CD8-positive, alpha-beta memory T cell (primary cell): ENCODE measurements at regions of chr22 and their contacts with region 1.

Region 1: GRCh38 chr22:30356449-30357235 is at the starts of genes CCDC157 and SF3A1:
- DNase-seq: peak; percentile 81 to 89 (median 88)
- H3K4me3 ChIP-seq: peak within 1 kb of the TSS; percentile 96
- H3K4me3 Mint-ChIP-seq: peak within 1 kb of the TSS; percentile 94 to 99 (median 98)
- H3K27ac ChIP-seq: peak within 1 kb of the TSS; percentile 98
- H3K27ac Mint-ChIP-seq: peak within 1 kb of the TSS; percentile 91 to 99 (median 96)
- H3K4me1 ChIP-seq: peaks cover 41% of the 10 kb centered on the region
- H3K4me1 Mint-ChIP-seq: peaks cover 46 to 57% (median 57%) of the 10 kb centered on the region in 3 donors
- H3K27me3 ChIP-seq: no peaks in the 10 kb centered on the region
- H3K27me3 Mint-ChIP-seq: peaks cover 0 to 3% of the 10 kb centered on the region in 2 donors
- total RNA-seq, gene CCDC157: 2.7 to 2.9 TPM
- total RNA-seq, gene SF3A1: 235 to 241 TPM

Region 2: GRCh38 chr22:30195245-30196140 is 161.1 kb before region 1 on chr22:
- CTCF ChIA-PET with region 1: no interaction called
- POLR2A ChIA-PET with region 1: no interaction called
- DNase-seq: no peak
- H3K4me3 ChIP-seq: no peak overlapping the region
- H3K4me3 Mint-ChIP-seq: no peak overlapping the region
- H3K27ac ChIP-seq: no peak overlapping the region
- H3K27ac Mint-ChIP-seq: peak overlapping the region in 6 of 8 donors; percentile 51 to 92 (median 74)
- H3K4me1 ChIP-seq: peaks cover 11% of the 10 kb centered on the region
- H3K4me1 Mint-ChIP-seq: peaks cover 21 to 27% (median 26%) of the 10 kb centered on the region in 3 donors
- H3K27me3 ChIP-seq: no peaks in the 10 kb centered on the region
- H3K27me3 Mint-ChIP-seq: peaks cover 0 to 7% of the 10 kb centered on the region in 2 donors

Region 3: GRCh38 chr22:30305519-30305905 is 51.1 kb before region 1 on chr22:
- CTCF ChIA-PET with region 1: no interaction called
- POLR2A ChIA-PET with region 1: interaction called, 15 read pairs
- DNase-seq: peak in 4 of 5 donors; percentile 35 to 68 (median 60)
- H3K4me3 ChIP-seq: peak overlapping the region; percentile 61
- H3K4me3 Mint-ChIP-seq: peak overlapping the region; percentile 64 to 77 (median 69)
- H3K27ac ChIP-seq: peak overlapping the region; percentile 40
- H3K27ac Mint-ChIP-seq: peak overlapping the region; percentile 78 to 99 (median 91)
- H3K4me1 ChIP-seq: peaks cover 99% of the 10 kb centered on the region
- H3K4me1 Mint-ChIP-seq: peaks cover 94 to 100% (median 99%) of the 10 kb centered on the region in 3 donors
- H3K27me3 ChIP-seq: no peaks in the 10 kb centered on the region
- H3K27me3 Mint-ChIP-seq: no peaks in the 10 kb centered on the region